ENCODE measurements at regions of chr10 and their contacts with region 1.

Region 1: GRCh38 chr10:128125944-128126764 is at the start of gene MKI67:
- DNase-seq: peak; percentile 87 to 92 (median 88)
- H3K4me3 ChIP-seq: peak within 1 kb of the TSS; percentile 70 to 71
- H3K4me3 Mint-ChIP-seq: peak within 1 kb of the TSS; percentile 90 to 96 (median 93)
- H3K27ac ChIP-seq: peak within 1 kb of the TSS; percentile 72
- H3K27ac Mint-ChIP-seq: peak within 1 kb of the TSS; percentile 71 to 95 (median 90)
- H3K4me1 ChIP-seq: peaks cover 42% of the 10 kb centered on the region
- H3K4me1 Mint-ChIP-seq: peaks cover 11 to 37% (median 30%) of the 10 kb centered on the region in 4 donors
- H3K27me3 ChIP-seq: peaks cover 12% of the 10 kb centered on the region
- H3K27me3 Mint-ChIP-seq: peaks cover 6 to 20% of the 10 kb centered on the region in 2 donors
- total RNA-seq, gene MKI67: 0.17 to 0.93 TPM

Region 2: GRCh38 chr10:128095027-128095752 is 31.0 kb before region 1 on chr10:
- CTCF ChIA-PET with region 1: no interaction called
- POLR2A ChIA-PET with region 1: interaction called, 10 read pairs
- intact Hi-C with region 1: no loop called
- DNase-seq: peak; percentile 26 to 71 (median 60)
- H3K4me3 ChIP-seq: peak overlapping the region in 1 of 2 donors; percentile 19
- H3K4me3 Mint-ChIP-seq: peak overlapping the region; percentile 49 to 74 (median 71)
- H3K27ac ChIP-seq: peak overlapping the region; percentile 40
- H3K27ac Mint-ChIP-seq: peak overlapping the region; percentile 32 to 88 (median 69)
- H3K4me1 ChIP-seq: peaks cover 28% of the 10 kb centered on the region
- H3K4me1 Mint-ChIP-seq: peaks cover 13 to 33% (median 18%) of the 10 kb centered on the region in 4 donors
- H3K27me3 ChIP-seq: no peaks in the 10 kb centered on the region
- H3K27me3 Mint-ChIP-seq: no peaks in the 10 kb centered on the region

Measured in CD4-positive, alpha-beta memory T cell (primary cell).